Ascending aorta (tissue), 2 donors: ENCODE measurements at regions of chr6 and their contacts with region 1.

Region 1: GRCh38 chr6:27772261-27773001 is 139.8 kb downstream of the OR2B2 start:
- DNase-seq: peak; percentile 51 to 92
- H3K4me3 ChIP-seq: no peak overlapping the region
- H3K27ac ChIP-seq: no peak overlapping the region
- H3K4me1 ChIP-seq: no peaks in the 10 kb centered on the region
- H3K27me3 ChIP-seq: no peaks in the 10 kb centered on the region
- CTCF ChIP-seq: peak; percentile 87 to 94 (median 88)

Region 2: DNA sequence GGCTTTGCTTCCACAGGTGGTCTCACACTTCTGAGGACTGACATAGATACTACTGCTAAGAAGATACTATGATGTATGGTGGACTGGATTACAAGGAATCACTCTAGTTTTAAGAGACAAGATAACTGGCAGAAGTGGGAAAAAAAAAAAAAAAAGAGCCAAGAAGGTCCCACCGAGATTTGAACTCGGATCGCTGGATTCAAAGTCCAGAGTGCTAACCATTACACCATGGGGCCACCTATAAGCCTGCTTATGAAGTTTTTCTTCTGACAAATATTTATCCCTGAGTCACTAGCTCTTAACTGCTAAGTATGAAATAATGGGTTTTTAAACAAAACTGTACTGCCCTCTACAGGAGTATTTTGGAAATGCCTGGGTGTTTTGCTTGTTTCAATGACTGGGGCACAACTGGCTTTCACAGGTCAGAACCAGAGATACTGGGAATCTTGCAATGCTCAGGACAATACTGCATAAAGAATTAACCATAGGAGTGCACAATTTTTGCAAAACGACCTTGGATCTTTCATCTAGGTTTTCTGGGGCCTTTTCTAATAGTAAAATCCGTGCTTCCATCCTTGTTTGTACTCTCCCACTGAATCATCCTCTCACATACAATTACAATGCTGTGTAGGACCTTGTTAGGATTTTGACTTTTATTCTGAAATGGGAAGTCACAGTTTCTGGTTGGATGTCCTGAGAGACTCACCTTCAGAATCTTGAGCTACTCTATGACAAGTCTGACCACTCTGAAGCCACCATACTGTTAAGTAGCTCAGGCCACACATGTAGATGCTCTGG is 23.5 kb after region 1 on chr6:
- intact Hi-C with region 1: loop called (anchors 1 kb)
- DNase-seq: peak in 1 of 2 donors; percentile 76
- H3K4me3 ChIP-seq: no peak overlapping the region
- H3K27ac ChIP-seq: no peak overlapping the region
- H3K4me1 ChIP-seq: no peaks in the 10 kb centered on the region
- H3K27me3 ChIP-seq: no peaks in the 10 kb centered on the region
- CTCF ChIP-seq: peak; percentile 78 to 85 (median 83)